ENCODE measurements at regions of chr20 and their contacts with region 1.

Region 1: GRCh38 chr20:35994994-35995453 is 26.6 kb downstream of the CNBD2 start:
- DNase-seq: peak; percentile 51
- H3K4me3 Mint-ChIP-seq: no peak overlapping the region
- H3K27ac Mint-ChIP-seq: no peak overlapping the region
- H3K4me1 Mint-ChIP-seq: peaks cover 3% of the 10 kb centered on the region
- H3K27me3 Mint-ChIP-seq: peaks cover 10% of the 10 kb centered on the region

Region 2: GRCh38 chr20:36132802-36133211 is 137.8 kb after region 1 on chr20:
- intact Hi-C with region 1: loop called (anchors 1 kb)
- DNase-seq: no peak
- H3K4me3 Mint-ChIP-seq: no peak overlapping the region
- H3K27ac Mint-ChIP-seq: no peak overlapping the region
- H3K4me1 Mint-ChIP-seq: no peaks in the 10 kb centered on the region
- H3K27me3 Mint-ChIP-seq: peaks cover 1% of the 10 kb centered on the region

Region 3: DNA sequence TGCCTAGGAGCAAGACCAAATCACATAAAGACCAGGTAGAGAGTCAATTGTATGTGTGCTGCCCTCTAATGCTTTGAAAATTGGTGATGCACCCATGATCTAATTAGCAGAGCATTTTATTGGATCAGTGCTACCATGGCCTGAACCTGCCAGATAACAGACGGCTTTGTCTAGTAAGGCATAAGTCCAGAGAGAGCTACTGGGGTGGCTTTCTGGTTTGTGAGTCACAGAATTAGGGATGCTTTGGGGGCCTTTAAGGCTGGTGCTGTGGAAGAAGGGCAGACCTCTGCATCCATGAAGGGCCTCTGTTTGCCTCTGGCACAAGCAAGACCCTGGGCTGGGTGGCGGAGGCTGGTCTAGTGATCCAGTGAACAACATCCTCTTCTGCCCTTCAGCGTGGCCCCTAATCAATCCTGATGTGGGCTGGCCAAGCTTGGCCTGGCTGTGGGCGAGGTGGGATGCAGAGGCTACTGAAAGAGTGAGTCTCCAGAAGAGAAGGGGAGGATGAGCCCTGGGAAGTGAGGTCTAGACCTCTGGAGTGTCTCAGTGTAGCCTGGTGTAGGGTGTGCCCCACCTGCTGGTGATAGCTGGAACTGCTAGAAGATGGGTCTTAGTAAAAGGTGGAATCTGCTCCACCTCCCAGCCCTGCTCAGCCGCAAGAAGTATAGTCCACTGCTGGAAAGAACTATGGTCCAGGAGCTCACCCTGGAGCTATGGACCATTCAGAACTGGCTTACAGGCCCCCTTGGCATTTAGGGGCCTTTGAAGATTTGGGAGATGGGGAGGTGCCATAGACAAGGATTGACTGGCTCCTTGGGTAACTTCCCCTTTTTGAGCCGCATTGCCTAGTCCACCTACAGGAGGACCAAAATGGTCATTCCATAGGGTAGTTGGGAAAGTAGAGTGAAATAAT is 204.6 kb after region 1 on chr20:
- intact Hi-C with region 1: loop called (anchors 2 kb)
- DNase-seq: peak; percentile 50
- H3K4me3 Mint-ChIP-seq: no peak overlapping the region
- H3K27ac Mint-ChIP-seq: no peak overlapping the region
- H3K4me1 Mint-ChIP-seq: peaks cover 2% of the 10 kb centered on the region
- H3K27me3 Mint-ChIP-seq: peaks cover 12% of the 10 kb centered on the region

Measured in activated T-helper 2 cell treated with anti-CD3 and anti-CD28 coated beads, Interferon-gamma antibody, Interleukin-2, Interleukin-4, amounts not matched to agents 10 μg/mL and 5 μg/mL and 100 μg/mL, durations not matched to agents 14 hours and 24 hours and 36 hours (primary cell).